Activated T-helper 2 cell treated with anti-CD3 and anti-CD28 coated beads, Interferon-gamma antibody, Interleukin-2, Interleukin-4, amounts not matched to agents 10 μg/mL and 5 μg/mL and 100 μg/mL, durations not matched to agents 14 hours and 24 hours and 36 hours (primary cell): ENCODE measurements at regions of chr10 and their contacts with region 1.

Region 1: GRCh38 chr10:100683545-100684300 is 61.7 kb upstream of the PAX2 start:
- DNase-seq: no peak
- H3K4me3 Mint-ChIP-seq: no peak overlapping the region
- H3K27ac Mint-ChIP-seq: no peak overlapping the region
- H3K4me1 Mint-ChIP-seq: no peaks in the 10 kb centered on the region
- H3K27me3 Mint-ChIP-seq: peaks cover 75% of the 10 kb centered on the region

Region 2: GRCh38 chr10:100715445-100716385 is 32.0 kb after region 1 on chr10:
- intact Hi-C with region 1: loop called (anchors 5 kb)
- DNase-seq: no peak
- H3K4me3 Mint-ChIP-seq: no peak overlapping the region
- H3K27ac Mint-ChIP-seq: no peak overlapping the region
- H3K4me1 Mint-ChIP-seq: no peaks in the 10 kb centered on the region
- H3K27me3 Mint-ChIP-seq: peaks cover 86% of the 10 kb centered on the region

Region 3: GRCh38 chr10:100728928-100729861 is 45.5 kb after region 1 on chr10:
- intact Hi-C with region 1: no loop called
- DNase-seq: no peak
- H3K4me3 Mint-ChIP-seq: no peak overlapping the region
- H3K27ac Mint-ChIP-seq: no peak overlapping the region
- H3K4me1 Mint-ChIP-seq: peaks cover 8% of the 10 kb centered on the region
- H3K27me3 Mint-ChIP-seq: peaks cover 87% of the 10 kb centered on the region

Region 4: GRCh38 chr10:100998991-100999741 is 315.4 kb after region 1 on chr10:
- intact Hi-C with region 1: no loop called
- DNase-seq: peak; percentile 73
- H3K4me3 Mint-ChIP-seq: peak overlapping the region; percentile 90
- H3K27ac Mint-ChIP-seq: peak overlapping the region; percentile 91
- H3K4me1 Mint-ChIP-seq: peaks cover 18% of the 10 kb centered on the region
- H3K27me3 Mint-ChIP-seq: peaks cover 3% of the 10 kb centered on the region